ENCODE measurements at regions of chr19 and their contacts with region 1.

Region 1: DNA sequence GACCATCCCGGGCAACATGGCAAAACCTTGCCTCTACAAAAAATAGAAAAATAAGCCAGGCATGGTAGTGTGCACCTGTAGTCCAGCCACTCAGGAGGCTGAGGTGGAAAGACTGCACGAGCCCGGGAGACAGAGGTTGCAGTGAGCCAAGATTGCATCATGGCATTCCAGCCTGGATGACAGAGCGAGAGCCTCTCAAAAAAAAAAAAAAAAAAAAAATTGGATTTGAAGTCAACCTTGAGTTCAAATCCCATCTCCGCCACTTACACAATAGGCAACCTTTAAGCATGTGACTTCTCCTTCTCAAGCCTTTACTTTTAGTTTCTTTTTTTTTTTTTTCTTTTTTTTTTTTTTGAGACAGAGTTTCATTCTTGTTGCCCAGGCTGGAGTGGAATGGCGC is 12.0 kb downstream of the KASH5 start:
- H3K4me3 ChIP-seq: no peak overlapping the region
- H3K27ac ChIP-seq: no peak overlapping the region
- H3K4me1 ChIP-seq: peaks cover 7% of the 10 kb centered on the region
- CTCF ChIP-seq: no peak

Region 2: DNA sequence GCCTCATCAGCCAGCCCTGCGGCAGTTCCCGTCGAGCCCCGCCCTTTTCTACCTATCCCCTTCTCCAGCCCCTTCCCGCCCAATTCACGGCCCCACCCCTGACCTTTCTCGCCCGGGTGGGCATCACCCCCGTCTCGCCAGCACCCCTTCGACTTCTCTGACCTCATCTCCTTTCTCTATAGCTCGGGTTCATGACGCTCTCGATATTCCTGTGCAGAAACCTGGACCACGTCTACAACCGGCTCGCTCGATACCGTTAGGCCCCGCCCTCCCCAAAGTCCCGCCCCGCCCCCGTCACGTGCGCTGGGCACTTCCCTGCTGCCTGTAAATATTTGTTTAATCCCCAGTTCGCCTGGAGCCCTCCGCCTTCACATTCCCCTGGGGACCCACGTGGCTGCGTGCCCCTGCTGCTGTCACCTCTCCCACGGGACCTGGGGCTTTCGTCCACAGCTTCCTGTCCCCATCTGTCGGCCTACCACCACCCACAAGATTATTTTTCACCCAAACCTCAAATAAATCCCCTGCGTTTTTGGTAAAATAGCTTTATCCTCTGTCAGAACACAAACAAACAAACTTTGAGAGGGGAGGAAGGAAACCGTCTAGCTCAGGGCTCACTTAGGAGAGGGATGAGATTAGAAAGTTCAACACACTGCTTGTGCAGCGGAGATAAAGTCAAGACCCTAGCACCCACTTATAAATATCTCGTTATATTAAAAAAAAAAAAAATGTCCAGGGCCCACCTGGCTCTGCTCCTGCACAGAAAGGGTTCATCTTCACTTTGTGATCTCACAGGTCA is 59.8 kb before region 1 on chr19:
- CTCF ChIA-PET with region 1: no interaction called
- POLR2A ChIA-PET with region 1: no interaction called
- H3K4me3 ChIP-seq: no peak overlapping the region
- H3K27ac ChIP-seq: peak overlapping the region; percentile 29; the same call in 1 of the 2 replicates
- H3K4me1 ChIP-seq: peaks cover 7% of the 10 kb centered on the region; the same call in 1 of the 2 replicates
- CTCF ChIP-seq: no peak

Region 3: GRCh38 chr19:49443366-49444099 is 43.5 kb after region 1 on chr19:
- CTCF ChIA-PET with region 1: interaction called, 59 read pairs
- POLR2A ChIA-PET with region 1: interaction called, 6 read pairs
- H3K4me3 ChIP-seq: peak overlapping the region; percentile 60
- H3K27ac ChIP-seq: peak overlapping the region; percentile 50
- H3K4me1 ChIP-seq: peaks cover 7% of the 10 kb centered on the region
- CTCF ChIP-seq: peak; percentile 99

Measured in HEK293 (cell line).